ENCODE measurements at regions of chr7 and their contacts with region 1.

Region 1: DNA sequence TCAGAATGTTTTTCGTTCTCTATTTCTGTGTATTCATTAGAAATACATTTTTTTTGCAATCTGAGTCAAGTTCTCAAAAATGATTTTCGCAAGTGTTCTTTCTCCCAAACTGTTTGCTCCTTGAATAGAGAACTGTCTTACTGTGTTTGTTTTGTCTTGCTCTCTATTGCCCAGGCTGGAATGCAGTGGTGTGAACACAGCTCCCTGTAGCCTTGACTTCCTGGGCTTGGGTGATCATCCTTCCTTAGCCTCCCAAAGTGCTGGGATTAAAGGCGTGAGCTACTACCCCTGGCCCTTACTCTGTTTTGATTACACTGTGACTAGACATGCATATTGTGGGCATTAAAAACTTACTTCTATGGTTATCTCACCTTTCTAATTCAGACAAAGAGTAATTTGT is 56.7 kb downstream of the LUC7L2 start:
- DNase-seq: no peak
- H3K4me3 ChIP-seq: no peak overlapping the region
- CTCF ChIP-seq: no peak

Region 2: GRCh38 chr7:139439375-139439774 is 23.0 kb after region 1 on chr7:
- CTCF ChIA-PET with region 1: interaction called, 129 read pairs
- POLR2A ChIA-PET with region 1: no interaction called
- DNase-seq: no peak
- H3K4me3 ChIP-seq: no peak overlapping the region
- CTCF ChIP-seq: no peak